ENCODE measurements at regions of chr5 and their contacts with region 1.

Region 1: DNA sequence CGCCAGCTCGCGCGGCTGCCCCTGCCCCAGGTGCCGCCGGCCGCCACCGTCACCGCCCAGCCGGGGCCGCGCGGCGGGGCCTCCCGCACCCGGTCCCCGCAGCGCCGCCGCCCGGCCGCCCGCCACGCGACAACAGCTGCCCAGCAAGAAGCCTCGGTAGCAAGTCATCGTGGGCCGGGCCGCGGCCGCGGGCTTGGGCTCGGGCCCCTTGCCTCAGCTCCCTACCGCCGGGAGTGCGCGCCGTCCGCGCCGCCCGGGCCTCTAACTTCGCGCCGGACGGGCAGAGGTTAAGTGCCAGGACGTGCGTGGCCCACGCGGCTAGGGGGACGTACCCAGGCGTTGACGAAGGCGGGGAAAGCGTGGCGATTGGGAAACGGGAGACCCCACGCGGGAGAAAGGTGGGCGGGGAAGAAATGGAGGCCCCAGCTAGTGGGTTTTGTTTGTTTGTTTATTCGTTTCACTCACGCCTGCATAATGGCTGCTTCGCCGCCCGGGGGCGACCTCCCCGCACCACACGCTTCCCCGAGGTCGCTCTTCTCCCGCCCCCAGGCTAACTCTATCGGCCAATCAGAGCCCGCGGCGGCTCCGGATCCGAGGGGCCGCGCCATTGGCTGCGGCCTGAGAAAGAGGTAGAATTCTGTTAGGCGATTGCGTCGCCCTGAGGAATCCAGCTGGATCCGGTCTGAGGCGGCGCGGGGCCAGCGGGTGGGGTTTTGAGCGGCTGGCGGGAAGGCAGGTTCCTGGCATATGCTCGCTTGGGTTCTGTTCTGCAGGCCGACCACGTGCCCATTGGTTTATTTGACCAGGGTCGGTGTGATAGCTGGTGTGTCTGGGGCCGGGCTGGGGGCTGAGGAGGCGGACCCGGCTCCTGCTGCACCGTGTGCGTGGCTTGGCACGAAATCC is at the start of gene NADK2:
- DNase-seq: peak; percentile 90 to 98
- H3K4me3 ChIP-seq: peak within 1 kb of the TSS; percentile 65 to 88
- H3K27ac ChIP-seq: peak within 1 kb of the TSS; percentile 93 to 95
- H3K4me1 ChIP-seq: peaks cover 0 to 8% of the 10 kb centered on the region in 2 donors
- H3K27me3 ChIP-seq: no peaks in the 10 kb centered on the region
- CTCF ChIP-seq: peak; percentile 60 to 84 (median 74)
- total RNA-seq, gene NADK2: 18.4 TPM

Region 2: GRCh38 chr5:36041538-36041846 is 200.4 kb before region 1 on chr5:
- intact Hi-C with region 1: no loop called
- DNase-seq: no peak
- H3K4me3 ChIP-seq: no peak overlapping the region
- H3K27ac ChIP-seq: no peak overlapping the region
- H3K4me1 ChIP-seq: no peaks in the 10 kb centered on the region
- H3K27me3 ChIP-seq: no peaks in the 10 kb centered on the region
- CTCF ChIP-seq: no peak

Region 3: GRCh38 chr5:36252722-36253365 is 11.0 kb after region 1 on chr5:
- intact Hi-C with region 1: loop called (anchors 1 kb)
- DNase-seq: no peak
- H3K4me3 ChIP-seq: peak overlapping the region in 1 of 2 donors; percentile 23
- H3K27ac ChIP-seq: peak overlapping the region; percentile 55 to 60
- H3K4me1 ChIP-seq: peaks cover 4 to 18% of the 10 kb centered on the region in 2 donors
- H3K27me3 ChIP-seq: no peaks in the 10 kb centered on the region
- CTCF ChIP-seq: no peak

Measured in ascending aorta (tissue), 2 donors.